Activated T-helper 1 cell treated with anti-CD3 and anti-CD28 coated beads, Interleukin-12 subunit alpha, Interleukin-12 subunit beta, Interleukin-2, Interleukin-4 antibody, amounts not matched to agents 30 ng/mL and 10 ng/mL and 1 ng/mL, durations not matched to agents 14 hours and 24 hours and 36 hours (primary cell): ENCODE measurements at regions of chr13 and their contacts with region 1.

Region 1: DNA sequence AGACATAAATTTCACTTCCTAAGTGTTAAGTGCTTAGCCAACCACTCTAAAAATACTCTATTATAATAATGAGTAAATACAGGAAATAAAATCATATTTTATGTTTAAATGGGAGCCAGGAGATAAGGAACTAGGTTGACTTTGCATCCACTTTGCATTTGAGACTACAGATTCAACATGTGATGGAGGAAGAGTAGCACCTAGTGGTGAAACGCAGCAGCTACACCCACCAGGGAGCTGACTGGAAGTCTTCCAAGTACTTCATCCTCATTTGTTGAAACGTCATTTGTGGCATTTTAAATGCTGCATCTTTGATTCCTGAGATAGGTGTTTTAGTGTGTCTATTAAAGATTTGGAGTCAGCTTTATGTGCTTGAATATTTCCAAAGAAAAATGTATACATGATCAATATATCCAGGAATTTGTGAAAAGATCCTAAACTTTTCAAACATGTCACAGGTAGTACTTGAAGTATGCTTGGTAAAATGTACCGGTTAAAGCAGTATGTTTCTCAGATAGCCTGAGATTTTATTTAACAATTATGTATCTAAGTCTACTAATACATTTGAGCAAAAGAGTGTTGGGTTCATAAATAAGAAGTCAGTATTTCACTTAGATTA is 17.4 kb upstream of the KCTD12 start:
- DNase-seq: peak; percentile 50
- H3K4me3 Mint-ChIP-seq: no peak overlapping the region
- H3K27ac Mint-ChIP-seq: no peak overlapping the region
- H3K4me1 Mint-ChIP-seq: no peaks in the 10 kb centered on the region
- H3K27me3 Mint-ChIP-seq: peaks cover 24% of the 10 kb centered on the region

Region 2: DNA sequence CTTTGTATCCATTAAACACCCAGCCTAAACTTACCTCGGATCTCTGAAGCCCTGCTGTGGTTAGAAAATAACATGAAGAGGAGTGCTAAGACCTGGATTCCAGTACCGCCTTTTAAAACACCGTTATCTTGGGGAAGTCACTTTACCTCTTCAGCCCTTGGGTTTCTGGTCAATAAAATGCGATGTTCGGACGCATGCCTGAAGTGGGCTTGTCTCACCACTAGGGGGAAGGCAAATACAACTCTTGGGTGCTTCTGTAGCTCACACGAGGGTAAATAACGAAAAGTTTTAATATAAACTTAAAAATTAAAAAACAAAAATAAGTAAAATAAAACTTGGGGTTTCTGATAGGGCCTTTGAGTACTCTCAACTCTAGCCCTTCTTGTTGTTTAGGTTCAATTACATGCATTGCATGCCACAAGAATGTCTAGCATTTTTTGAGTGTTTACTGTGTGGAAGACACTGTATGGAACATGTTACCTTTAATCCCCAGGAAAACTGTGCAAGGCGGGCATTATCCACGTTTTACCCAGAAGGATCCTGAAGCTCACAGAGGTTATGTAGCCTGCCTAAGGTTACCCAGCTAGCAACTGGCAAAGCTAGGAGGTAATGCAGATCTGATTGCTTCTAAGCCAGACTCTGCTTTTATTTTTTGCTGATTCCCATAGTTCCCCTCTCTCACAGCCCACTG is 1027.1 kb before region 1 on chr13:
- intact Hi-C with region 1: loop called (anchors 1 kb)
- DNase-seq: peak; percentile 27
- H3K4me3 Mint-ChIP-seq: no peak overlapping the region
- H3K27ac Mint-ChIP-seq: no peak overlapping the region
- H3K4me1 Mint-ChIP-seq: peaks cover 17% of the 10 kb centered on the region
- H3K27me3 Mint-ChIP-seq: peaks cover 8% of the 10 kb centered on the region

Region 3: DNA sequence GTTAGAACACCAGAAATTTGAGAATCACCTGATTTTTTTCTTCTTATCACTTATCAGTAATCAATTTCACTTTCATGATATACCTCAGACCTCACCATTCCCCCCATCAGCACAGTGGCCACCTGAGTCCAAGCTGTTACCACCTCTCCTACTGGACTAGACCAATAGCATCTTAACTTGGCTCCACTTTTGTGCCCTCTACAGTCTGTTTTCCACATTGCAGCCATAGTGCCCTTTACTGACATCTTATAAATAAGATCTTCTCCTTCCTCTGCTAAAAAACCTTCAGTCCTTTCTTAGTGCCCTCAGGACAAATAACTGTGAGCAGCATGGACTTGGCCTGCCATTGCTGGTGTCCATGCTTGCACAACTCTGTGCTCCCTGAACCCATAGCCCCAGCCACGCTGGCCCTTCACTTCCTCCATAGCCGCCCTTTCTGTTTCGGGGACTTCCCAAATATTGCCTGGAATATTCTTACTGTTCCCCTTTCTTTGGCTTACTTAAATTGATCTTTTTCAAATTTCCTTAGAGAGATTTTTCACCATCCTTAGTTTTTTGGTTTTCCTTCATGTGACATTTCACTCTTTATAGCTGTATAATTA is 886.8 kb before region 1 on chr13:
- intact Hi-C with region 1: loop called (anchors 10 kb)
- DNase-seq: no peak
- H3K4me3 Mint-ChIP-seq: no peak overlapping the region
- H3K27ac Mint-ChIP-seq: no peak overlapping the region
- H3K4me1 Mint-ChIP-seq: no peaks in the 10 kb centered on the region
- H3K27me3 Mint-ChIP-seq: no peaks in the 10 kb centered on the region

Region 4: DNA sequence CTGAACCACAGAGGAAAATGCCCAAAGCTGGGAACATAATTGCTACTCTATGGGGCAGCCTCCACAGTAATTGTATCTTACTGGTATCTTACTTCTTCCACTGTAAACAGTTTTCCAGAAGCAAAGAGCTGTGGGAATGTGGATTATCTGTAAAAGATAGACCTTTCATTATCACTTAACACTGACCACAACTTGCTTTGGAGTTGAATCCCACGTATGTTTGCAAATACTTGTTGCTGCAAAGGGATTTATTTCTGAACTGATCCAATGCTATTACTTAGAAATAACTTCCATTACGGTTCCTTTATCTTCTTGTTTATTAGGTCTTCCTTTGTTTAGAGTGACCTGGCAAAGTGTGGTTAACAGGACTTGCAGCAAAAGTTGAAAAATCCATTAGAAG is 235.5 kb before region 1 on chr13:
- intact Hi-C with region 1: loop called (anchors 1 kb)
- DNase-seq: no peak
- H3K4me3 Mint-ChIP-seq: no peak overlapping the region
- H3K27ac Mint-ChIP-seq: no peak overlapping the region
- H3K4me1 Mint-ChIP-seq: no peaks in the 10 kb centered on the region
- H3K27me3 Mint-ChIP-seq: peaks cover under 1% of the 10 kb centered on the region

Region 5: GRCh38 chr13:76822698-76823267 is 80.9 kb before region 1 on chr13:
- intact Hi-C with region 1: loop called (anchors 1 kb)
- DNase-seq: no peak
- H3K4me3 Mint-ChIP-seq: no peak overlapping the region
- H3K27ac Mint-ChIP-seq: no peak overlapping the region
- H3K4me1 Mint-ChIP-seq: no peaks in the 10 kb centered on the region
- H3K27me3 Mint-ChIP-seq: peaks cover 2% of the 10 kb centered on the region